Right lobe of liver (tissue), 6 donors: ENCODE measurements at regions of chr18 and their contacts with region 1.

Region 1: GRCh38 chr18:58781627-58782194 is 83.0 kb upstream of the ZNF532 start:
- DNase-seq: peak; percentile 63 to 75 (median 72)
- ATAC-seq: peak; percentile 94 to 97 (median 96)
- H3K4me3 ChIP-seq: no peak overlapping the region
- H3K27ac ChIP-seq: no peak overlapping the region
- H3K4me1 ChIP-seq: no peaks in the 10 kb centered on the region
- H3K27me3 ChIP-seq: no peaks in the 10 kb centered on the region
- CTCF ChIP-seq: peak; percentile 84 to 96 (median 88)
- POLR2A ChIP-seq: no peak

Region 2: DNA sequence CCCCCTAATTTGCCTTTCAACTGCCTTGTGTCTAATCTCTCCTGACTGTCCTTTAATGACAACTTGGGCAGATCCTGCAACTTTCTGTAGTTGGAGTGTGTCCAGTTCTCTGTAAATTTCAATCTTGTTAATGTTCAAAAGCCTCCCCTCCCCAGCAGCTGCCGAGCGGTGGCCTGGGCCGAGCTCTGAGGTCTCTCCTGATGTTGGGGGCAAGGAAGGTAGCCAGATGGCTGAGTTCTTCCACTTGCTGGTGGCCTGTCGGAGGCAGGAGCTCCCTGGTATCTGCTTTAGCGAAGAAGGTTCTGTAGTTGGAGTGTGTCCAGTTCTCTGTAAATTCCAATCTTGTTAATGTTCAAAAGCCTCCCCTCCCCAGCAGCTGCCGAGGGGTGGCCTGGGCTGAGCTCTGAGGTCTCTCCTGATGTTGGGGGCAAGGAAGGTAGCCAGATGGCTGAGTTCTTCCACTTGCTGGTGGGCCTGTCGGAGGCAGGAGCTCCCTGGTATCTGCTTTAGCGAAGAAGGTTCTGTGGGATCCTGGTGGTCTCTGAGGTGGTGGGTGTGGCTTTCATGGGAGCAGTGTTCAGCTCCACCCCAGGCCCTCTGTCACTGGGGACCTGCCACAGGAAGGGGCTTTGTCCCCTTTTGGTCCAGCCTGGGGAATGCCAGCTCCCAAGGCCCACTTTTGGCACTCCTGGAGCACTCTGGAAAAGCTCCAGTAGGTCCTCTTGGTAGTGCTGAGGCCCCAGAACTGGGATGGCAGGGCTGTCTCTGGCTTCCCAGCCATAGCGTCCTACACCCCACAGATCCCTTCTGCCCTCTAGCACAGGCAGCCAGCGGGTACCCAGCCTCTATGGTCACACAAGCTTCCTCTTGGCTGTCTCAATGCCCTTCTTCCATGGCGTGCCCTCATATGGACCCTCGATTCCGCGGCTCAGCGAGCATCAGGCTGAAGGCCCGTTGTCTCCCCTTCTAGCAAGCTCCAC is 364.7 kb before region 1 on chr18:
- intact Hi-C with region 1: no loop called
- DNase-seq: peak; percentile 61 to 81 (median 74)
- ATAC-seq: peak; percentile 22 to 41 (median 30)
- H3K4me3 ChIP-seq: peak overlapping the region; percentile 18 to 43 (median 36)
- H3K27ac ChIP-seq: peak overlapping the region; percentile 84 to 99 (median 98)
- H3K4me1 ChIP-seq: peaks cover 0 to 56% (median 25%) of the 10 kb centered on the region in 4 donors
- H3K27me3 ChIP-seq: no peaks in the 10 kb centered on the region
- CTCF ChIP-seq: no peak
- POLR2A ChIP-seq: peak; percentile 54

Region 3: GRCh38 chr18:59056706-59057492 is 275.2 kb after region 1 on chr18:
- intact Hi-C with region 1: loop called (anchors 5 kb)
- DNase-seq: peak; percentile 75 to 84 (median 82)
- ATAC-seq: peak; percentile 88 to 93 (median 89)
- H3K4me3 ChIP-seq: no peak overlapping the region
- H3K27ac ChIP-seq: no peak overlapping the region
- H3K4me1 ChIP-seq: peaks cover 0 to 13% (median 0%) of the 10 kb centered on the region in 4 donors
- H3K27me3 ChIP-seq: no peaks in the 10 kb centered on the region
- CTCF ChIP-seq: peak; percentile 85 to 94 (median 90)
- POLR2A ChIP-seq: no peak

Region 4: GRCh38 chr18:59063300-59063906 is 281.7 kb after region 1 on chr18:
- intact Hi-C with region 1: loop called (anchors 5 kb)
- DNase-seq: no peak
- ATAC-seq: no peak
- H3K4me3 ChIP-seq: no peak overlapping the region
- H3K27ac ChIP-seq: no peak overlapping the region
- H3K4me1 ChIP-seq: no peaks in the 10 kb centered on the region
- H3K27me3 ChIP-seq: no peaks in the 10 kb centered on the region
- CTCF ChIP-seq: no peak
- POLR2A ChIP-seq: no peak

Region 5: GRCh38 chr18:59141294-59142068 is 359.8 kb after region 1 on chr18:
- intact Hi-C with region 1: no loop called
- DNase-seq: no peak
- ATAC-seq: peak; percentile 33 to 53 (median 44)
- H3K4me3 ChIP-seq: no peak overlapping the region
- H3K27ac ChIP-seq: peak overlapping the region in 1 of 3 donors; percentile 44
- H3K4me1 ChIP-seq: peaks cover 0 to 40% (median 6%) of the 10 kb centered on the region in 4 donors
- H3K27me3 ChIP-seq: no peaks in the 10 kb centered on the region
- CTCF ChIP-seq: no peak
- POLR2A ChIP-seq: peak; percentile 31